Transverse colon (tissue), 4 donors: ENCODE measurements at regions of chr2 and their contacts with region 1.

Region 1: GRCh38 chr2:160522951-160523710 is 29.5 kb upstream of the RBMS1 start:
- DNase-seq: no peak
- H3K4me3 ChIP-seq: no peak overlapping the region
- H3K27ac ChIP-seq: no peak overlapping the region
- H3K4me1 ChIP-seq: no peaks in the 10 kb centered on the region
- H3K27me3 ChIP-seq: no peaks in the 10 kb centered on the region
- CTCF ChIP-seq: no peak
- EP300 ChIP-seq: no peak
- POLR2A ChIP-seq: no peak

Region 2: GRCh38 chr2:160582490-160583145 is 59.5 kb after region 1 on chr2:
- in situ Hi-C with region 1: no loop called
- intact Hi-C with region 1: loop called (anchors 2 kb)
- DNase-seq: no peak
- H3K4me3 ChIP-seq: no peak overlapping the region
- H3K27ac ChIP-seq: peak overlapping the region; percentile 9 to 62 (median 60)
- H3K4me1 ChIP-seq: peaks cover 0 to 7% (median 2%) of the 10 kb centered on the region in 4 donors
- H3K27me3 ChIP-seq: no peaks in the 10 kb centered on the region
- CTCF ChIP-seq: no peak
- EP300 ChIP-seq: no peak
- POLR2A ChIP-seq: no peak